Left colon (tissue), 2 donors: ENCODE measurements at regions of chr12 and their contacts with region 1.

Region 1: GRCh38 chr12:117228239-117228638 is 38.0 kb upstream of the FBXO21 start:
- DNase-seq: no peak
- ATAC-seq: no peak

Region 2: DNA sequence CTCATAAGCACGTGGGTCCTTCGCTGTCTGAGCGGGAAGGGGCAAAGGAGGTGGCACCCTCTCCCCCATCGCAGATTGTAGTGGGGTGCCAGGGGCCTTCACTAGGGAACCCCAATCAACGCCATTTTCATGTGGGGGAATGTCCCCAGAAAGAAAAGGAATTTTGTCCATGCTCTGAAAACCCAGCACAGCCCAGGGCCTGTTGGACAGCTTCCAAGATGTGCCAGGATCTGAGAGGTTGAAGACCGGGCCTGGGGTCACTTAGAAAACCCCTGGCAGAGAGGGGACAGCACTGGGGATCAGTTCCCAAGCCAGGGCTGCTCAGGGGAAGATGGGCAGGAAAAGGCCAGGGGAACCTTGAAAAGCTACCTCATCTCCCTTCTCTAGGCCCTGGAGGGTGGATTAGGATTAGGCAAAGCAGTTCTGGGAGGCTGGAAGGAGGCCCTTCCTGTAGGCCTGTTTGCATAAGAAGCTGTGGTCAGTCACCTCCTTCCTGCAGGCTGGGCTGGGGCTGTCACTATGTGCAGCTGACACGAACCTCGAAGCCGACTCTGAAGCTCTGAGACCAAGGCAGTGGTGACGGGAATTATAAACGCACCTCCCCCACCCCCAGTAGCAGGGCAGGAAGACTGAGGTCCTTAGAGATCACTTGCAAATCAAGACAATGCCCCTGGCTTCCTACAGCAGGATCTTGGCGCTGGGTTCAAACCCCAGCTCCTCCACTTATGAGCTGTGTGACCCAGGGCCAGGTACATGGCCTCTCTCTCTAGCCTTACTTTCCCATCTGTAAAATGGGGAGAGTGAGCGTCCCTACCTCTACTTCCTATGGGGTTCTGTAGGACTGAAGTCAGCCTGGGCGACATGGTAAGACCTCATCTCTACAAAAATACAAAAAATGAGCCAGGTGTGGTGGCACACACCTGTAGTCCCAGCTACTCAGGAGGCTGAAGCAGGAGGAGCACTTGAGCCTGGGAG is 158.0 kb before region 1 on chr12:
- intact Hi-C with region 1: no loop called
- DNase-seq: peak; percentile 22 to 37
- ATAC-seq: no peak

Region 3: GRCh38 chr12:117836999-117837736 is 608.9 kb after region 1 on chr12:
- intact Hi-C with region 1: loop called in 1 of 2 experiments (anchors 10 kb)
- DNase-seq: peak in 1 of 2 donors; percentile 83
- ATAC-seq: peak; percentile 76